ENCODE measurements at regions of chr2 and their contacts with region 1.

Region 1: GRCh38 chr2:164792316-164793178 is 49.1 kb downstream of the COBLL1 start:
- DNase-seq: no peak
- H3K4me3 ChIP-seq: no peak overlapping the region
- H3K27ac ChIP-seq: peak overlapping the region in 19 of 59 donors; percentile 3 to 71 (median 19)
- H3K27me3 ChIP-seq: no peaks in the 10 kb centered on the region
- CTCF ChIP-seq: no peak

Region 2: DNA sequence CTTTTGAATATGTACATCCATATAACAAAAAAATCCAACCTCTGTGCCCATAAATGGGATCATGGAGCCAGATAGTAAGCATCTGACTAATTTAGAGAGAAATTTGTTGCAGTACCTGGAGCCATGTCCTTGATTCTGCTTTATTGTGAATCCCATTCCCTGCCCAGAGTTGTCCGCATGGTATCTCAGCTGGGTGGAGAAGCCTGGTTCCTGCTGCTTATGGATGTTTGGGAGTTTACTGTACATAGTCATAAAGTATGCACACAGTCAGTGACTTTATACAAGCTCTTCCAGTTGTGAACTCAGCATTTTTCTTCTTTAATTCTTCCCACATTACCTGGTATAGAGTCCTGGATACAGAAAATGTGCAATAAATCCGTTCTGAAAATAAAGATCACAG is 1402.7 kb before region 1 on chr2:
- intact Hi-C with region 1: loop called in 1 of 2 experiments (anchors 10 kb)
- DNase-seq: no peak
- H3K4me3 ChIP-seq: no peak overlapping the region
- H3K27ac ChIP-seq: no peak overlapping the region
- H3K27me3 ChIP-seq: no peaks in the 10 kb centered on the region
- CTCF ChIP-seq: no peak

Region 3: DNA sequence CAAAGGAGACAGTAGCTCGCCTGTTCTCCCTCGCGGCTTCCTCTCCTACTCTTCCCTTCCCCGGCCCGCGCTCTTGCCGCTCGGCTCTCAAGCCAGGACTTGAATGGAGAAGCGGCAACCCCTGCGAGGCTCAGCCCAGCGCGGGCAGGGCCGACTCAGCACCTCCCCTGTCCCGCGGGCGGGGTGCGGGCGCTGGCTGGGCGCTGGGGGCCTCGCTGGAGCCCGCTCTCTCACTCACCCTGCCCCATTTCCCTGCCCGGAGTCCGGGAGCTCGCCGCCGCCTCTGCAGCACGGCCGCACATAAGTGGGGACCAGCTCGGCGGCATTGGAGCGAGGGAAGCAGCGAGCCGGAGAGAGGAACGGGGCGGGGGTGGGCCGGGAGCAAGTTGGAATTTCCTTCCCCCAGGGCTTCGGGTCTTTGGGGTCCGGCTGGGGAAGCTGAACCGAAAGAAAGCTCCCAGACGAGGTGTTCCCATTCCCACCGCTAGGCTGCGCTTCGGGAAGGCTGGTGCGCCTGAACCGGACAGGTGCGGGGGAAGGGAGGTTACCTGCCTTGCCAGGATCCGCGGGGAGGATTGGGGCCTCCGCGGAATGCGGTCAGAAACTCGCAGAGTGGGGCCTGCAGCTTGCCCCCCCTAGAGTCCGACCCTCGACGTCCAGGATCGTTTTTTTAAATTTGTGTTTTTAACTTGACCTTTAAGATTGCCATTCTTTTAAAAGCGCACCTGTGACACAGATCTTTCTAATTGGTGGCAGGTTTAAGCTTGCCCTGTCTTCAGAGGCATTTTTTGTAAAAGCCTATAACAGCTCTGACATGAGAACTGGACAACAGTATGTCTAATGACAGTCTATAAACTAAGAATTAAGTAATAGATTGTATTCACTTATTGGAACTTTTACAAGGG is 49.4 kb after region 1 on chr2 and contains the start of gene COBLL1:
- intact Hi-C with region 1: no loop called
- DNase-seq: peak in 8 of 10 donors; percentile 7 to 59 (median 43)
- H3K4me3 ChIP-seq: peak within 1 kb of the TSS; percentile 55 to 88 (median 75)
- H3K27ac ChIP-seq: peak within 1 kb of the TSS in 58 of 59 donors; percentile 26 to 98 (median 86)
- H3K27me3 ChIP-seq: peaks cover 0 to 8% (median 0%) of the 10 kb centered on the region in 45 donors
- CTCF ChIP-seq: peak; percentile 16 to 83 (median 68)
- total RNA-seq, gene COBLL1: 11.3 to 54.1 (median 24.6) TPM

Region 4: DNA sequence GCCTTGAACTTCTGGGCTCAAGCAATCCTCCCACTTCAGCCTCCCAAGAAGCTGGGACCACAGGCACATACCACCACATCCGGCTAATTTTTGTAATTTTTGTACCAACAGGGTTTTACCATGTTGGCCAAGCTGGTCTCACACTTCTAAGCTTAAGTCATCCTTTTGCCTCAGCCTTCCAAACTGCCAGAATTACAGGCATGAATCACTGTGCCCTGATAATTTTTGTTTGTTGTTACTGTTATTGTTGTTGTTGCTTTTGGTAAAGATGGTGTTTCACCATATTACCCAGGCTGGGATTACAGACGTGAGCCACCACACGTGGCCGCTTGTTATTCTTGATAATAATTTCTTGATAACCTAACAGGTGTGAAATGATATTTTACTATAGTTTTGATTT is 59.6 kb after region 1 on chr2:
- intact Hi-C with region 1: no loop called
- DNase-seq: no peak
- H3K4me3 ChIP-seq: no peak overlapping the region
- H3K27ac ChIP-seq: no peak overlapping the region
- H3K27me3 ChIP-seq: peaks cover 0 to 5% (median 0%) of the 10 kb centered on the region in 45 donors
- CTCF ChIP-seq: no peak

Region 5: GRCh38 chr2:164882276-164882675 is 89.7 kb after region 1 on chr2:
- intact Hi-C with region 1: no loop called
- DNase-seq: no peak
- H3K4me3 ChIP-seq: no peak overlapping the region
- H3K27ac ChIP-seq: no peak overlapping the region
- H3K27me3 ChIP-seq: no peaks in the 10 kb centered on the region
- CTCF ChIP-seq: no peak